Dendritic cell treated with granulocyte-macrophage colony-stimulating factor and Interleukin-4, amounts not matched to agents 40 ng/mL and 50 ng/mL, for 4 days (primary cell): ENCODE measurements at regions of chr10 and their contacts with region 1.

Region 1: GRCh38 chr10:20004087-20004523 is 187.9 kb downstream of the PLXDC2 start:
- H3K4me3 Mint-ChIP-seq: peak overlapping the region; percentile 40
- H3K27ac Mint-ChIP-seq: peak overlapping the region; percentile 90
- H3K4me1 Mint-ChIP-seq: peaks cover 64% of the 10 kb centered on the region
- H3K27me3 Mint-ChIP-seq: no peaks in the 10 kb centered on the region

Region 2: GRCh38 chr10:19638182-19638895 is 365.8 kb before region 1 on chr10:
- intact Hi-C with region 1: loop called (anchors 10 kb)
- H3K4me3 Mint-ChIP-seq: peak overlapping the region; percentile 70
- H3K27ac Mint-ChIP-seq: peak overlapping the region; percentile 94
- H3K4me1 Mint-ChIP-seq: peaks cover 23% of the 10 kb centered on the region
- H3K27me3 Mint-ChIP-seq: no peaks in the 10 kb centered on the region

Region 3: DNA sequence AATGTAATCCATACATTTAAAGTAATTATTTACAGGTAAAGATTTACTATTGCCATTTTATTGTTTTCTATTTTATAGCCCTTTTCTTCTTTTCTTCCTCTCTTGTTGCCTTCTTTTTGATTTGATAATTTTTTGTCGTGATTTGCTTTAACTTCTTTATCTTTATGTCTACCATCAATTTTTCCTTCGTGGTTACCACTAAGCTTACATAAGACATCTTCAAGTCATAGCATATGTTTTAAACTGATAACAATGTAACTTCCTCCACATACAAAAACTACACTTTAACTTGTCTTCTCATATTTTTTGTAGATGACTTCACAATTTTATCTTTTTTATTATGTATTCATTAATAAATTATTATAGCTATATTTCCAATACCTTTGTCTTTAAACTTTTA is 128.7 kb after region 1 on chr10:
- intact Hi-C with region 1: loop called (anchors 10 kb)
- H3K4me3 Mint-ChIP-seq: no peak overlapping the region
- H3K27ac Mint-ChIP-seq: no peak overlapping the region
- H3K4me1 Mint-ChIP-seq: peaks cover 22% of the 10 kb centered on the region
- H3K27me3 Mint-ChIP-seq: no peaks in the 10 kb centered on the region